Panc1 (cell line): ENCODE measurements at regions of chr10 and their contacts with region 1.

Region 1: DNA sequence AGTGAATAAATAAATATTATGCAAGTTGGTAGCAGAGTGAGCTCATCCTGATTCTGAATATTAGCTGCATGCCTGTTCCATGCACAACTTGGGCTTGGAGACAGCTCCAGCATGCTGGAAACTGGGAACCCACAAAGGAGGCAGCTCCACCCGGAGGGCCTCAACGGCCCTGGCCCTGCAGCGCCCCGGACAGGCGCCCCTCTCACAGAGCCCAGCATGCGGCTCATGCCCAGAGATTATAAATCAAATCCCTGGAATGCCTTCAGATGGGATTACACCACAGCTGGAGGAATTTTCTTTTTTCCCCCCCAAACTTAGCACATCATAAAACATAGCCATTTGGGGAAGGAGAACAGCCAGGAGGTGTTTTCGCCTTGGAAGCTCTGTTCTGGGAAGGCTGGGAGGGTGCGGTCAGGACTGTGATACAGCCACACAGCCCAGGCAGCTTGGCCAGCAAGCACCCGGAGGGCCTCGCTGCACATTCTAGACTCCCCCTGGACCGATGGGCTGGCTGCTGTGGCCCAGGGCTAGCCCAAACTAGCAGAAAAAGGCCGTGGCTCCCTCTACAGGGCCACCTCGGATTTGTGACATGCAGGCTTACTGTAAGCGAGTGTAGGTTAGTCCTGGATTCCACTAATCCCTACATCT is 102.4 kb downstream of the PTPN20 start:
- DNase-seq: no peak
- ATAC-seq: no peak; the same call in 1 of the 2 replicates
- H3K4me3 ChIP-seq: no peak overlapping the region
- H3K27ac ChIP-seq: no peak overlapping the region
- H3K4me1 ChIP-seq: no peaks in the 10 kb centered on the region
- H3K27me3 ChIP-seq: no peaks in the 10 kb centered on the region
- CTCF ChIP-seq: no peak

Region 2: DNA sequence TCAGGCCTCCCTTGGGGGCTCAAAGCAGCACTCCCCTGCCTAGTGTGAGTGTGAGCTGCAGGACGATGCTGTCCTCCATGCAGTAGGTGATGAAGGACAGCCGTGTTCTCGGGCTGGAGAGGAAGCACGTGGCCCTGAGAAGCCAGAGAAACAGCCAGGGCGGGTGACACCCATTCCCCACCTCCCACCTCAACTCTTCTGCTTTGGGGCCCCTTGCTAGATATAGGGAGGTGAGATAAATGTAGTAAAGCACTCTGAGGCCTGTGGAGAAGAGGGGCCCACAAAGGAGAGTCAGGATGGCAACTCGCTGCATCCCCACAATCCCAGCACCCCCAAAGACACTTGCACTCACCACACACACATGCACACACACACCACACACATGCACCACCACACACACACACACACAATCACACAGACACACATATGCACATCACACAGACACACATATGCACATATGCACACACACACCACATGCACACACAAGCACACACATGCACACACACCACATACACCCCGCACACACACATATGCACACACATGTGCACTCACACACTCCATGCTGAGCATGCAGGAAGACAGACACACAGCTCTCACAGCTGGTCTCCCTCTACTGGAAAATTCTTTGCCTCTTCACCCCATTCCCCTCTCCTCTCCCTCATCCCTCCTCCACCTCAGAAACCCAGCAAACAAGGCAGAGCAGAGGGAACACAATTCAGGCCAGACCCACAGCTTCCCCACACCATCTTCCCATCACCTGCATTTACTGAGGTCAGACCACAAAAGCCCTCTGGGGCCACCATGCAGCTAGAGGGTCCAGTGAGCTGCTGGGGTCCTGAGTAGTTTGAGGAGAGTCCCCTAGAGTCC is 439.7 kb after region 1 on chr10:
- CTCF ChIA-PET with region 1: no interaction called
- POLR2A ChIA-PET with region 1: interaction called, 10 read pairs
- in situ Hi-C with region 1: no loop called
- intact Hi-C with region 1: no loop called
- DNase-seq: no peak
- ATAC-seq: no peak
- H3K4me3 ChIP-seq: no peak overlapping the region
- H3K27ac ChIP-seq: no peak overlapping the region
- H3K4me1 ChIP-seq: 0 out of 2 replicates have a peak, but pooled peaks cover 3% of the 10 kb centered on the region
- H3K27me3 ChIP-seq: no peaks in the 10 kb centered on the region
- CTCF ChIP-seq: no peak